Activated CD4-positive, alpha-beta memory T cell treated with anti-CD3 and anti-CD28 coated beads for 36 hours (primary cell): ENCODE measurements at regions of chr13 and their contacts with region 1.

Region 1: GRCh38 chr13:39952249-39953233 is 297.1 kb downstream of the COG6 start:
- DNase-seq: no peak
- H3K4me3 Mint-ChIP-seq: no peak overlapping the region
- H3K27ac Mint-ChIP-seq: no peak overlapping the region
- H3K4me1 Mint-ChIP-seq: peaks cover 44% of the 10 kb centered on the region
- H3K27me3 Mint-ChIP-seq: no peaks in the 10 kb centered on the region

Region 2: GRCh38 chr13:40770934-40771618 is 818.5 kb after region 1 on chr13 and contains the start of gene MRPS31:
- CTCF ChIA-PET with region 1: no interaction called
- POLR2A ChIA-PET with region 1: no interaction called
- intact Hi-C with region 1: loop called (anchors 10 kb)
- DNase-seq: peak; percentile 97
- H3K4me3 Mint-ChIP-seq: peak within 1 kb of the TSS; percentile 100
- H3K27ac Mint-ChIP-seq: peak within 1 kb of the TSS; percentile 94
- H3K4me1 Mint-ChIP-seq: peaks cover 34% of the 10 kb centered on the region
- H3K27me3 Mint-ChIP-seq: no peaks in the 10 kb centered on the region
- total RNA-seq, gene MRPS31: 35.6 to 40.4 TPM